Ascending aorta (tissue), 2 donors: ENCODE measurements at regions of chr12 and their contacts with region 1.

Region 1: GRCh38 chr12:118372541-118373495 is at the start of gene TAOK3:
- DNase-seq: peak; percentile 98 to 100
- H3K4me3 ChIP-seq: peak within 1 kb of the TSS; percentile 74 to 96
- H3K27ac ChIP-seq: peak within 1 kb of the TSS; percentile 73 to 95
- H3K4me1 ChIP-seq: peaks cover 2 to 17% of the 10 kb centered on the region in 2 donors
- H3K27me3 ChIP-seq: no peaks in the 10 kb centered on the region
- CTCF ChIP-seq: no peak
- total RNA-seq, gene TAOK3: 39.3 TPM

Region 2: GRCh38 chr12:118016424-118017264 is 356.2 kb before region 1 on chr12 and contains the start of gene RFC5:
- intact Hi-C with region 1: loop called (anchors 2 kb)
- DNase-seq: peak; percentile 86 to 98
- H3K4me3 ChIP-seq: peak within 1 kb of the TSS; percentile 67 to 84
- H3K27ac ChIP-seq: peak within 1 kb of the TSS in 1 of 2 donors; percentile 22
- H3K4me1 ChIP-seq: peaks cover 0 to 4% of the 10 kb centered on the region in 2 donors
- H3K27me3 ChIP-seq: no peaks in the 10 kb centered on the region
- CTCF ChIP-seq: no peak
- total RNA-seq, gene RFC5: 5.2 TPM

Region 3: DNA sequence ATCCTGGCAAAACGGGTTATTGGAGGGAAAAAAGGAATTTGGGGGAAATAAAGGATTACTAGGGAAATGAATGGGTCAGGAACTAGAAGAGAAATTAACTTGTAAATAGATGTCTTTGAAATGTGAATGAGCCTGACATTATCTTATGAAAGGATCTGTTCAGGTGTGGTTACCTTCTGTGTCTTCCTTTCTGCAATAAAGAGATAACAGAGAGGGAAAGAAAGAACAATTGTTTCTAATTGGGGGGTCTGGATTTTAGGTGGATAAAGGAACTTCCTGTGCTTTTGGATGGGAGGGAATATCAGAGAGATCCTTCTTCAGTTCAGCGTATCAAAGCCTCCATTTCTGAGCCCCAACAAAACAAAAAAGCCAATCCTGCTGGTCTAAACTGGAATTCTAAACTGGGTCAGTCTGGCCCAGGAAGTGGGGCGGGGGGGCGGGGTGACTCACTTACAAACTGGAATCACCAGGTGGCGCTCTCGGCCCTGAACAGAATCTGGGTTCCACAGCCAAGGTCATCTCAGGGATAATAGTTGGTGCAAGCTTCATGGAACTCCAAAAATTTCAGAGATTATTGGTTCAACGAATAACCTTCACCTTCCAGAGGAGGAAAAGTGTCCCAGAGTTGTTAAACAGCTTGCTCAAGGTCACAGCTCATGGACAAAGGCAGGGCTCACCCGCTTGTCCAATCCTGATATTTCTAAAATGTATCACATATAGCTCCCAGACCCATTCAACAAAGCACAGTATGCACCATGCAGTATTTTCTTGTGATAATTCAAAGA is 252.0 kb before region 1 on chr12:
- intact Hi-C with region 1: loop called (anchors 5 kb)
- DNase-seq: peak in 1 of 2 donors; percentile 84
- H3K4me3 ChIP-seq: no peak overlapping the region
- H3K27ac ChIP-seq: no peak overlapping the region
- H3K4me1 ChIP-seq: no peaks in the 10 kb centered on the region
- H3K27me3 ChIP-seq: no peaks in the 10 kb centered on the region
- CTCF ChIP-seq: peak; percentile 5 to 88 (median 82)

Region 4: DNA sequence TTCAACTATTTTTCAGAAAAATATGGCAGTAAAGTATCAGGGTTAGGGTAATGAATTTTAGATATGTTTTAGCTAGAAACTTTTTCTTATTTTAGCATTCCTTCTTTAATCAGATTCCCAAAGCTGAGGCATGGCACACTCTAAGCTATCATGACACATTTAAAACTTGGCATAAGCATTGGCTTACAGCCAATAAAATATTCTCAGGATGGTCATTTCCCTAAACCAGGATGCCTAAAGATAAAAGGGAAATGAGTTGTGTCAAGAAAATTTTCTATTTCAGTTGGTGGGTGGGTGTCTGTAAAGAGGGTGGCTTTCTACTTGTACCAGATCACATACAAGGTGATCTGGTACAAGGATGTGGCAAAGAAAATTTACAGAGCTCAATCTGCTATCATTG is 189.1 kb before region 1 on chr12:
- intact Hi-C with region 1: loop called (anchors 1 kb)
- DNase-seq: no peak
- H3K4me3 ChIP-seq: no peak overlapping the region
- H3K27ac ChIP-seq: no peak overlapping the region
- H3K4me1 ChIP-seq: peaks cover 0 to 4% of the 10 kb centered on the region in 2 donors
- H3K27me3 ChIP-seq: no peaks in the 10 kb centered on the region
- CTCF ChIP-seq: no peak

Region 5: GRCh38 chr12:118206107-118206412 is 166.8 kb before region 1 on chr12:
- intact Hi-C with region 1: no loop called
- DNase-seq: no peak
- H3K4me3 ChIP-seq: no peak overlapping the region
- H3K27ac ChIP-seq: no peak overlapping the region
- H3K4me1 ChIP-seq: no peaks in the 10 kb centered on the region
- H3K27me3 ChIP-seq: no peaks in the 10 kb centered on the region
- CTCF ChIP-seq: no peak

Region 6: DNA sequence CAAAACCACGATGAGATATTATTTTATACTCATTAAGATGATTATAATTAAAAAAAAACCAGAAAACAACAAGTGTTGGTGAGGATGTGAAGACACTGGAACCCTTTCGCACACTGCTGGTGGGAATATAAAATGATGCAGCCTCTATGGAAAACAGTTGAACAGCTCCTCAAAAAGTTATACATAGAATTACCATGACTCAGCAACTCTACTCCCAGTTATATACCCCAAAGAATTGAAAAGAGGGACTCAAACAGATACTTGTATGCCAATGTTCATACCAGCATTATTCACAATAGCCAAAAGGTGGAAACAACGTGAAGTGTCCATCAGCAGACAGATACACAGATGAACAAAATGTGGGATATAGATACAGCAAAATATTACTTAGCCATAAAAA is 53.2 kb before region 1 on chr12:
- intact Hi-C with region 1: no loop called
- DNase-seq: no peak
- H3K4me3 ChIP-seq: no peak overlapping the region
- H3K27ac ChIP-seq: no peak overlapping the region
- H3K4me1 ChIP-seq: no peaks in the 10 kb centered on the region
- H3K27me3 ChIP-seq: no peaks in the 10 kb centered on the region
- CTCF ChIP-seq: no peak

Region 7: DNA sequence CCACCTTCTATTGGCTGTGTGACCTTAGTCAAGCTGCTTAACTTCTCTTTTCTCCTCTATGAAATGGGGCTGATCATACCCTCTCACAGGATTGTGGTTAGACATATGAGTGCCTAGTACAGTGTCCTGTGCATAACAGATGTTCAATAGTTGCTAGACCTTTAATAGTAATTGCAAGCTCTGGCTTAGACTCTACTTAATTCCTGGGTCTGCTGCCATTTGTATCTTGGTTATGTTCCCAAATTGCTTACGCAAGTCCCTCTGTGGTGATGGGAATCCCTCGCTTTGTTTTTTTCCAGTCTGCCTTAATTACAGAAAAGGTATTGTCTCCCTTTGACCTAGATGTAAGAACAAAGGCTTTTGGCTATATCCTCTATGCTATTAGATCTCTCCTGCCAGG is 18.6 kb after region 1 on chr12:
- intact Hi-C with region 1: no loop called
- DNase-seq: no peak
- H3K4me3 ChIP-seq: no peak overlapping the region
- H3K27ac ChIP-seq: no peak overlapping the region
- H3K4me1 ChIP-seq: no peaks in the 10 kb centered on the region
- H3K27me3 ChIP-seq: no peaks in the 10 kb centered on the region
- CTCF ChIP-seq: no peak

Region 8: GRCh38 chr12:119176267-119176849 is 803.5 kb after region 1 on chr12:
- intact Hi-C with region 1: loop called (anchors 5 kb)
- DNase-seq: peak; percentile 90 to 99
- H3K4me3 ChIP-seq: peak overlapping the region; percentile 38 to 71
- H3K27ac ChIP-seq: peak overlapping the region; percentile 96 to 97
- H3K4me1 ChIP-seq: peaks cover 4 to 25% of the 10 kb centered on the region in 2 donors
- H3K27me3 ChIP-seq: no peaks in the 10 kb centered on the region
- CTCF ChIP-seq: no peak